CD4-positive, alpha-beta memory T cell (primary cell): ENCODE measurements at regions of chr5 and their contacts with region 1.

Region 1: GRCh38 chr5:96868603-96869371 is 7.5 kb upstream of the ERAP2 start:
- DNase-seq: peak; percentile 42 to 68 (median 59)
- H3K4me3 ChIP-seq: no peak overlapping the region
- H3K4me3 Mint-ChIP-seq: no peak overlapping the region
- H3K27ac ChIP-seq: no peak overlapping the region
- H3K27ac Mint-ChIP-seq: peak overlapping the region in 2 of 7 donors; percentile 0 to 38
- H3K4me1 ChIP-seq: peaks cover 34% of the 10 kb centered on the region
- H3K4me1 Mint-ChIP-seq: peaks cover 29 to 45% (median 33%) of the 10 kb centered on the region in 4 donors
- H3K27me3 ChIP-seq: no peaks in the 10 kb centered on the region
- H3K27me3 Mint-ChIP-seq: peaks cover 0 to 2% of the 10 kb centered on the region in 2 donors

Region 2: GRCh38 chr5:96752341-96753016 is 116.3 kb before region 1 on chr5:
- CTCF ChIA-PET with region 1: interaction called, 23 read pairs
- POLR2A ChIA-PET with region 1: no interaction called
- intact Hi-C with region 1: loop called (anchors 1 kb)
- DNase-seq: peak; percentile 44 to 66 (median 62)
- H3K4me3 ChIP-seq: no peak overlapping the region
- H3K4me3 Mint-ChIP-seq: no peak overlapping the region
- H3K27ac ChIP-seq: no peak overlapping the region
- H3K27ac Mint-ChIP-seq: peak overlapping the region in 3 of 7 donors; percentile 10 to 84 (median 50)
- H3K4me1 ChIP-seq: no peaks in the 10 kb centered on the region
- H3K4me1 Mint-ChIP-seq: peaks cover 0 to 3% (median under 1%) of the 10 kb centered on the region in 4 donors
- H3K27me3 ChIP-seq: no peaks in the 10 kb centered on the region
- H3K27me3 Mint-ChIP-seq: no peaks in the 10 kb centered on the region

Region 3: DNA sequence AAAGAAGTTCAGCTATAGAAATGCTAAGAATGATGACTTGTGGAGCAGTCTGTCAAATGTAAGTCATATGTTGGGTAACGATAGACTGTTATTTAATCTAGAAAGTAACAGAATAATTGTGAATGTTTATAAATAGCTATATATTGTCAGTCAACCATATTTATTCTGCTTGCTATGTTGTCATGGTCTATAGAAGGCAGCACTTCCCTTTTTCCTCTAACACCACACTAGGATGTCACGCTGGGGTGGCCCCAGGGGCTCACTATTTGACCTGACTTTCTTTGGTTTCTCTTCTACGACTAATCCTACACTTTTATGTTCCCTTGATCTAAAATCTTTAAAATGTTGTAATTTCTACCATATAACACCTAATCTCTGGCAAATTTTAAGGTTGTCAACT is 28.0 kb after region 1 on chr5:
- CTCF ChIA-PET with region 1: interaction called, 30 read pairs
- POLR2A ChIA-PET with region 1: interaction called, 10 read pairs
- intact Hi-C with region 1: loop called (anchors 2 kb)
- DNase-seq: no peak
- H3K4me3 ChIP-seq: no peak overlapping the region
- H3K4me3 Mint-ChIP-seq: peak overlapping the region; percentile 56 to 90 (median 80)
- H3K27ac ChIP-seq: peak overlapping the region; percentile 56
- H3K27ac Mint-ChIP-seq: peak overlapping the region; percentile 82 to 97 (median 92)
- H3K4me1 ChIP-seq: peaks cover 37% of the 10 kb centered on the region
- H3K4me1 Mint-ChIP-seq: peaks cover 26 to 55% (median 42%) of the 10 kb centered on the region in 4 donors
- H3K27me3 ChIP-seq: no peaks in the 10 kb centered on the region
- H3K27me3 Mint-ChIP-seq: no peaks in the 10 kb centered on the region

Region 4: DNA sequence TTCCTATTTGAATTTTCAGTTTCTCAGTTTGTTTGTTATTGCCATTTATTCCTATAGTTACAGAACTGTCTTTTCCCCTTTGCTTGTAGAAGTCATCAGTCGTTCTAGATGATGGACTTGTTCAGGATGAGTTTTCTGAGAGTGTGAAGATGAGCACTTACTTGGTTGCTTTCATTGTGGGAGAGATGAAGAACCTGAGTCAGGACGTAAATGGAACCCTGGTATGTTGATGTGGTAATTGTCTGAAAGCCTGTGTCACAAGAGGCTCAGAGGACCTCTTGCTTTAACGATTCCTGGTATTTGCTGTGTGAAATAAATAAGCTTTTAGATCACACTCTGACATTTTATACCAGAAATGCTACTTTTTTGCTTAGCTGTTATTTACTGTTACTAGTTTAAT is 117.7 kb after region 1 on chr5:
- CTCF ChIA-PET with region 1: interaction called, 11 read pairs
- POLR2A ChIA-PET with region 1: interaction called, 3 read pairs
- intact Hi-C with region 1: loop called (anchors 5 kb)
- DNase-seq: no peak
- H3K4me3 ChIP-seq: no peak overlapping the region
- H3K4me3 Mint-ChIP-seq: no peak overlapping the region
- H3K27ac ChIP-seq: no peak overlapping the region
- H3K27ac Mint-ChIP-seq: peak overlapping the region in 3 of 7 donors; percentile 1 to 82 (median 30)
- H3K4me1 ChIP-seq: peaks cover 12% of the 10 kb centered on the region
- H3K4me1 Mint-ChIP-seq: peaks cover 26 to 65% (median 47%) of the 10 kb centered on the region in 4 donors
- H3K27me3 ChIP-seq: no peaks in the 10 kb centered on the region
- H3K27me3 Mint-ChIP-seq: no peaks in the 10 kb centered on the region

Region 5: GRCh38 chr5:97019435-97020117 is 150.8 kb after region 1 on chr5:
- CTCF ChIA-PET with region 1: interaction called, 11 read pairs
- POLR2A ChIA-PET with region 1: interaction called, 3 read pairs
- intact Hi-C with region 1: no loop called
- DNase-seq: no peak
- H3K4me3 ChIP-seq: no peak overlapping the region
- H3K4me3 Mint-ChIP-seq: no peak overlapping the region
- H3K27ac ChIP-seq: no peak overlapping the region
- H3K27ac Mint-ChIP-seq: peak overlapping the region in 3 of 7 donors; percentile 3 to 61 (median 27)
- H3K4me1 ChIP-seq: no peaks in the 10 kb centered on the region
- H3K4me1 Mint-ChIP-seq: peaks cover 5 to 25% (median 16%) of the 10 kb centered on the region in 4 donors
- H3K27me3 ChIP-seq: no peaks in the 10 kb centered on the region
- H3K27me3 Mint-ChIP-seq: no peaks in the 10 kb centered on the region

Region 6: GRCh38 chr5:97097326-97098230 is 228.8 kb after region 1 on chr5:
- CTCF ChIA-PET with region 1: no interaction called
- POLR2A ChIA-PET with region 1: no interaction called
- intact Hi-C with region 1: no loop called
- DNase-seq: no peak
- H3K4me3 ChIP-seq: no peak overlapping the region
- H3K4me3 Mint-ChIP-seq: no peak overlapping the region
- H3K27ac ChIP-seq: no peak overlapping the region
- H3K27ac Mint-ChIP-seq: no peak overlapping the region
- H3K4me1 ChIP-seq: no peaks in the 10 kb centered on the region
- H3K4me1 Mint-ChIP-seq: peaks cover 6 to 8% (median 7%) of the 10 kb centered on the region in 4 donors
- H3K27me3 ChIP-seq: no peaks in the 10 kb centered on the region
- H3K27me3 Mint-ChIP-seq: peaks cover 7 to 8% of the 10 kb centered on the region in 2 donors

Region 7: GRCh38 chr5:97162045-97162444 is 293.3 kb after region 1 on chr5:
- CTCF ChIA-PET with region 1: interaction called, 218 read pairs
- POLR2A ChIA-PET with region 1: interaction called, 3 read pairs
- intact Hi-C with region 1: loop called (anchors 1 kb)
- DNase-seq: peak; percentile 44 to 61 (median 59)
- H3K4me3 ChIP-seq: no peak overlapping the region
- H3K4me3 Mint-ChIP-seq: no peak overlapping the region
- H3K27ac ChIP-seq: no peak overlapping the region
- H3K27ac Mint-ChIP-seq: peak overlapping the region in 4 of 7 donors; percentile 18 to 83 (median 45)
- H3K4me1 ChIP-seq: peaks cover 3% of the 10 kb centered on the region
- H3K4me1 Mint-ChIP-seq: peaks cover 3 to 18% (median 6%) of the 10 kb centered on the region in 4 donors
- H3K27me3 ChIP-seq: no peaks in the 10 kb centered on the region
- H3K27me3 Mint-ChIP-seq: no peaks in the 10 kb centered on the region